ENCODE measurements at regions of chr5 and their contacts with region 1.

Region 1: GRCh38 chr5:59790399-59791125 is 103.0 kb downstream of the PDE4D start:
- DNase-seq: no peak
- H3K4me3 Mint-ChIP-seq: peak overlapping the region; percentile 54
- H3K27ac Mint-ChIP-seq: peak overlapping the region; percentile 97
- H3K4me1 Mint-ChIP-seq: peaks cover 52% of the 10 kb centered on the region
- H3K27me3 Mint-ChIP-seq: peaks cover 1% of the 10 kb centered on the region

Region 2: GRCh38 chr5:59749782-59750520 is 40.6 kb before region 1 on chr5:
- intact Hi-C with region 1: loop called (anchors 5 kb)
- DNase-seq: no peak
- H3K4me3 Mint-ChIP-seq: no peak overlapping the region
- H3K27ac Mint-ChIP-seq: no peak overlapping the region
- H3K4me1 Mint-ChIP-seq: peaks cover 1% of the 10 kb centered on the region
- H3K27me3 Mint-ChIP-seq: peaks cover 8% of the 10 kb centered on the region

Region 3: GRCh38 chr5:59768152-59769040 is 22.2 kb before region 1 on chr5:
- intact Hi-C with region 1: loop called (anchors 1 kb)
- DNase-seq: no peak
- H3K4me3 Mint-ChIP-seq: peak overlapping the region; percentile 84
- H3K27ac Mint-ChIP-seq: peak overlapping the region; percentile 73
- H3K4me1 Mint-ChIP-seq: peaks cover 43% of the 10 kb centered on the region
- H3K27me3 Mint-ChIP-seq: peaks cover 44% of the 10 kb centered on the region